B cell (primary cell): ENCODE measurements at regions of chr6 and their contacts with region 1.

Region 1: DNA sequence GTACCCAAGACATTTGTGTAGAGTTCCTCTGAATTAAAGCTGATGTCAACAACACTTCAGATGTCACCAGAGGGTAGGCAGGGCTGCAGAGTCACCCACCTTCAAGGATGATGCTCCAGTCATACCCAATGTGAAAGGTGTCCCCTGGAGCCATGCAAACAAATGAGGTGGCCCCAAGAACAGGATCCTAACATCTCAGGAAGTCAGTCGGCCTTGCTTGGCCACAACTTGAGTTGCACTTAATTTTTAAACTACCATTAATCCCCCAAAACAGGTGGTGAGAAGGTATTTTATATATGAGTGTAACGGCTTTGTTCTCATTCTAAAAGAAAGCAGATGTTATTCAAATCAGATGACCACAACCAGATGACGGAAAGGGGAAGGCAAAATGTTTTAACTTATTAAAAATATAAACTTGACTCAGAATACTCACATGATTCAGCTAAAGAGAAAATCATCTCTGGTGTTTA is 21.1 kb upstream of the SERPINB1 start:
- DNase-seq: peak; percentile 84
- ATAC-seq: peak; percentile 48
- H3K4me3 ChIP-seq: peak overlapping the region in 1 of 5 experiments; percentile 2
- H3K4me3 Mint-ChIP-seq: peak overlapping the region; percentile 72
- H3K27ac ChIP-seq: peak overlapping the region; percentile 91 to 97
- H3K27ac Mint-ChIP-seq: peak overlapping the region; percentile 95
- H3K4me1 ChIP-seq: peaks cover 71 to 75% of the 10 kb centered on the region in 2 donors
- H3K4me1 Mint-ChIP-seq: peaks cover 81% of the 10 kb centered on the region
- H3K27me3 ChIP-seq: no peaks in the 10 kb centered on the region
- H3K27me3 Mint-ChIP-seq: no peaks in the 10 kb centered on the region
- CTCF ChIP-seq: no peak

Region 2: DNA sequence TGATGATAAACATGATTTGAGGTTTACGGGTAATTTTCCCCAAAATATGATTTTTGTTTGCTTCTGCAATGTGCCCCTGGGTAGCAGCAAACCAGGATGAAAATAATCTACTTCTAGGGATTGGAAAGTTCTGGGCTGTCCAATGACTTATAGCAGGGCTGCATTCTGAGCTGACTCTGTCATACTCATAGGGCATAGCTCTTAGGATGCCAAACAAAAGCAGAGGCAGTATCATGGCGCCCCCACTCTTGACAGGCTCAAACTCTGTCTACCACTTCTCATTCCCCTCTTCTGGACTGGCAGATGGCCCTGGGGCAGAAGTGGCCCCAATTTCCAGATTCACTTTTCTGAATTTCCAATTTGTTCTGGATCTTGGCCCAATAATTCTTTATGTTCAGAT is 31.4 kb before region 1 on chr6:
- CTCF ChIA-PET with region 1: no interaction called
- POLR2A ChIA-PET with region 1: no interaction called
- intact Hi-C with region 1: no loop called
- DNase-seq: no peak
- ATAC-seq: no peak
- H3K4me3 ChIP-seq: no peak overlapping the region
- H3K4me3 Mint-ChIP-seq: no peak overlapping the region
- H3K27ac ChIP-seq: no peak overlapping the region
- H3K27ac Mint-ChIP-seq: no peak overlapping the region
- H3K4me1 ChIP-seq: no peaks in the 10 kb centered on the region
- H3K4me1 Mint-ChIP-seq: peaks cover 8% of the 10 kb centered on the region
- H3K27me3 ChIP-seq: no peaks in the 10 kb centered on the region
- H3K27me3 Mint-ChIP-seq: no peaks in the 10 kb centered on the region
- CTCF ChIP-seq: no peak

Region 3: GRCh38 chr6:2891768-2892170 is 29.0 kb after region 1 on chr6:
- CTCF ChIA-PET with region 1: interaction called, 12 read pairs
- POLR2A ChIA-PET with region 1: interaction called, 4 read pairs
- intact Hi-C with region 1: no loop called
- DNase-seq: peak; percentile 87
- ATAC-seq: peak; percentile 90
- H3K4me3 ChIP-seq: peak overlapping the region in 4 of 5 experiments; percentile 5 to 34 (median 16)
- H3K4me3 Mint-ChIP-seq: peak overlapping the region; percentile 86
- H3K27ac ChIP-seq: peak overlapping the region; percentile 59 to 76
- H3K27ac Mint-ChIP-seq: peak overlapping the region; percentile 94
- H3K4me1 ChIP-seq: peaks cover 30 to 32% of the 10 kb centered on the region in 2 donors
- H3K4me1 Mint-ChIP-seq: peaks cover 59% of the 10 kb centered on the region
- H3K27me3 ChIP-seq: no peaks in the 10 kb centered on the region
- H3K27me3 Mint-ChIP-seq: no peaks in the 10 kb centered on the region
- CTCF ChIP-seq: no peak

Region 4: DNA sequence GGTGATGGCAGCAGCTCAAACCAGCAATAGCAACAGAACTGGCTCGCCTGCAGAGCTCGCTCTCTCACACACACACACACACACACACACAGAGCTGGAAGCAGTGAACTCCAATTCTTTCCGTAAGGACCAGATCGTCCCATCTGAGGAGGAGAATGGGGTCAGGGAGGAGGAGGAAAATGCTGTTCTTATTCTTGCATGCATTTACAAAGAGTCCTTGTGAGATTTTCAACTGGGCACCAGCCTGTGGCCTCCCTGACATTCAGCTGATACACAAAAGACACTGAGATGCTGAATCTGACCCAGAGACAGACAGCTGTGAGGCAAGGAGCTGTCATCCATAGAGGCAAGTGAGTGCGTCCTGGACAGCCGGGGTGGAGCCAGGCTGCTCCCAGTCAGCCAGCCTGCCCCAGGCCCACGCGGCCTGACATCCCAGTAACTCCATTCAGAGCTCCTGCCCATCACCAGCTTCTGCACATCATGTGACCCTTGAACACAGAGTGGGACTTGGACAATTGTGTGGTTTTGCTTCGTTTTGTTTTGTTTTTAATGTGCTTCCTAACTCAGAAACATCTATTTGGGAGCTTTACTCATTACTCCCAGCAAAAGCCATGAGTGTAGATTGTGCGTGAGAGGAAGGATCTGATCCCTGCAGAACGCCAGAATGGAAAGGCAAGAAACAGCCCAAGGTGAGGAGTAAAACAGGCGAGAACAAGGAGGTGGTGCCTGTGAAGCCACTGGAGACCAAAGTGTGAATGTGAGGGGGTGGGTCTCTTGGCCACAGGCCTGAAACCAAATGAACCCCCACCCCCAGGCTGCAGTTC is 38.3 kb after region 1 on chr6:
- CTCF ChIA-PET with region 1: interaction called, 4 read pairs
- POLR2A ChIA-PET with region 1: interaction called, 12 read pairs
- intact Hi-C with region 1: loop called (anchors 1 kb)
- DNase-seq: no peak
- ATAC-seq: no peak
- H3K4me3 ChIP-seq: peak overlapping the region in 4 of 5 experiments; percentile 10 to 95 (median 90)
- H3K4me3 Mint-ChIP-seq: peak overlapping the region; percentile 100
- H3K27ac ChIP-seq: peak overlapping the region; percentile 31 to 91
- H3K27ac Mint-ChIP-seq: peak overlapping the region; percentile 97
- H3K4me1 ChIP-seq: peaks cover 45 to 48% of the 10 kb centered on the region in 2 donors
- H3K4me1 Mint-ChIP-seq: peaks cover 56% of the 10 kb centered on the region
- H3K27me3 ChIP-seq: no peaks in the 10 kb centered on the region
- H3K27me3 Mint-ChIP-seq: no peaks in the 10 kb centered on the region
- CTCF ChIP-seq: no peak